AG04449 (cell line): ENCODE measurements at regions of chr12 and their contacts with region 1.

Region 1: GRCh38 chr12:63826006-63826585 is 18.4 kb upstream of the SRGAP1 start:
- DNase-seq: no peak
- H3K4me3 ChIP-seq: no peak overlapping the region
- CTCF ChIP-seq: peak; percentile 71

Region 2: GRCh38 chr12:63836936-63837335 is 10.8 kb after region 1 on chr12:
- CTCF ChIA-PET with region 1: interaction called, 18 read pairs
- POLR2A ChIA-PET with region 1: no interaction called
- DNase-seq: no peak
- H3K4me3 ChIP-seq: no peak overlapping the region
- CTCF ChIP-seq: no peak

Region 3: DNA sequence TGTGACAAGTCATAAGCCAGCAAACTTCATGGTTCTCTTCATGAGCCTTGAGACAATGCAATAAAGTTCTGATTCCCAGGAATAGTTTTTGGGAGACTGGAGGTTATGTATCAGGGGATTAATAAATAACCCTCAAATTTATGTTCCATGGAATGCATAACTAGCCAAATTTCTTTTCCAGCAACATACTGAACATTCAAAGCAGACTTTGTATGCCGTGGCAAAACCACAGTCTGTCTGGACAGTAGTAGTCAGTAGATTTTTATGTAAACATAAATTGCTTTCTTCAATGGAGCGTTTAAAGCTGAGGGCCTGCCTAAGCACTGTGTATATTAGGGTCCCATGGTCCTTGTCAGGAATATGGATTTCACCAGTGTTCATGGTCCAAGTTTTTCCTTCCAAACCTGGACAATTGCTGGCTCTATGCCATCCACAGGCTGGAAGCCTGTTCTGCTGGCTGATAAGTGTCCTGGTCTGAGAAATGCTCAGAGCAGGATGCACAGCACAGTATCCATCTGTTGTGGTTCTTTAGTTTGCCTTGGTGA is 163.3 kb after region 1 on chr12:
- CTCF ChIA-PET with region 1: no interaction called
- POLR2A ChIA-PET with region 1: no interaction called
- DNase-seq: no peak
- H3K4me3 ChIP-seq: no peak overlapping the region
- CTCF ChIP-seq: no peak

Region 4: DNA sequence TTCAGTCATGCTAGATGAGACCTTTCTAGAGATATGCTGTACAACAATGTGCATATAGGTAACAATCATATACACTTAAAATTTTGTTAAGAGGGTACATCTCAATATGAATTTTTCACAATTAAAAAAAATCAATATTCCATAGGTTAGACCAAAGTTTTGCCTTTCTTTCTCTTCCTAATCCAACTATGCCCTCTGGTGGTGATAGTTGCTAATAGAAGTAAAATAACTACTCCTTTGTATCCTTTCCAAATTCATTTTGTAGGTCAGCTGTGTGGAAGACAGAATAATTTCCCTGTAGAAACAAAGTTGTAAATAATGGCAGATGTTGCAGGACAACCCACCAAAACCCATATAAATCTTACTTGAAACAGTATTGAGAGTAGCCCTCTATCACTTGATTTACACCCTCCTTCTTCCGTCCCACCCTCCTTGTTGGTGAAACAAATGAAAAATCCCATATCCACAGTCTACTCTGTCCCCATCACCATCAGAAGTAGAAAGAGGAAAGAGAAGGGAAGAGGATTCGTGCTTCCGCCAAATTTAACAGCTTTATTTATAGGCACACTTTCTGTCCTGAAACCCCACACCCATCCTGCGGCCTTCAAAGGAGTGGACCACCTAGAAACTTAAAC is 430.2 kb after region 1 on chr12:
- CTCF ChIA-PET with region 1: interaction called, 92 read pairs
- POLR2A ChIA-PET with region 1: no interaction called
- DNase-seq: no peak
- H3K4me3 ChIP-seq: no peak overlapping the region
- CTCF ChIP-seq: peak; percentile 39

Region 5: GRCh38 chr12:64261813-64262212 is 435.7 kb after region 1 on chr12:
- CTCF ChIA-PET with region 1: interaction called, 92 read pairs
- POLR2A ChIA-PET with region 1: no interaction called
- DNase-seq: no peak
- H3K4me3 ChIP-seq: no peak overlapping the region
- CTCF ChIP-seq: no peak

Region 6: DNA sequence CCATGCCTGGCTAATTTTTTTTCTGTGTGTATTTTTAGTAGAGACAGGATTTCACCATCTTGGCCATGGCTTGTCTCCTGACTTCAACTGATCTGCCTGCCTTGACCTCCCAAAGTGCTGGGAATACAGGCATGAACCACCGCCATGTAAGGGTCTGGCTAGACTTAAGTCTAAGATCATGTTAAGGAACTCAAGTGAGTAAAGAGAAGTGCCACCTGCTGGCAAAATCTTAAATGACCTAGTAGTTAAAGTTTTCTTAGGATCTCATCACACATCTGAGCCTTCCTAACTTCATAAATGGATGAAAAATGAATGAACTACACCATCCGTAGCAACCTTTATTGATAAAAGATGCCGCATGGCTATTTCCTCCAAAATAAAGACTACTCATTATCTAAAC is 566.1 kb after region 1 on chr12:
- CTCF ChIA-PET with region 1: interaction called, 18 read pairs
- POLR2A ChIA-PET with region 1: no interaction called
- DNase-seq: no peak
- H3K4me3 ChIP-seq: no peak overlapping the region
- CTCF ChIP-seq: peak; percentile 21